Endothelial cell of umbilical vein (primary cell): ENCODE measurements at regions of chr19 and their contacts with region 1.

Region 1: GRCh38 chr19:39546599-39546998 is 6.6 kb upstream of the EID2 start:
- DNase-seq: no peak
- H3K4me3 ChIP-seq: no peak overlapping the region
- H3K27ac ChIP-seq: no peak overlapping the region
- H3K4me1 ChIP-seq: peaks cover 9% of the 10 kb centered on the region
- H3K27me3 ChIP-seq: peaks cover 8 to 11% of the 10 kb centered on the region in 2 experiments
- CTCF ChIP-seq: no peak
- POLR2A ChIP-seq: no peak

Region 2: GRCh38 chr19:39557441-39558151 is 11.0 kb after region 1 on chr19:
- CTCF ChIA-PET with region 1: interaction called, 13 read pairs
- POLR2A ChIA-PET with region 1: no interaction called
- dilution Hi-C with region 1: no loop called
- intact Hi-C with region 1: no loop called
- DNase-seq: no peak
- H3K4me3 ChIP-seq: no peak overlapping the region
- H3K27ac ChIP-seq: no peak overlapping the region
- H3K4me1 ChIP-seq: no peaks in the 10 kb centered on the region
- H3K27me3 ChIP-seq: peaks cover 5% of the 10 kb centered on the region in 2 experiments
- CTCF ChIP-seq: no peak
- POLR2A ChIP-seq: no peak

Region 3: GRCh38 chr19:39765091-39766076 is 218.8 kb after region 1 on chr19:
- CTCF ChIA-PET with region 1: interaction called, 8 read pairs
- POLR2A ChIA-PET with region 1: no interaction called
- dilution Hi-C with region 1: no loop called
- intact Hi-C with region 1: loop called (anchors 1 kb)
- DNase-seq: peak; percentile 43
- H3K4me3 ChIP-seq: no peak overlapping the region
- H3K27ac ChIP-seq: no peak overlapping the region
- H3K4me1 ChIP-seq: no peaks in the 10 kb centered on the region
- H3K27me3 ChIP-seq: no peaks in the 10 kb centered on the region
- CTCF ChIP-seq: peak; percentile 80 to 82
- POLR2A ChIP-seq: no peak